Activated CD4-positive, alpha-beta T cell treated with anti-CD3 and anti-CD28 coated beads, Interleukin-2, amount 10 ng/mL, durations not matched to agents 24 days and 14 days (primary cell): ENCODE measurements at regions of chr15 and their contacts with region 1.

Region 1: DNA sequence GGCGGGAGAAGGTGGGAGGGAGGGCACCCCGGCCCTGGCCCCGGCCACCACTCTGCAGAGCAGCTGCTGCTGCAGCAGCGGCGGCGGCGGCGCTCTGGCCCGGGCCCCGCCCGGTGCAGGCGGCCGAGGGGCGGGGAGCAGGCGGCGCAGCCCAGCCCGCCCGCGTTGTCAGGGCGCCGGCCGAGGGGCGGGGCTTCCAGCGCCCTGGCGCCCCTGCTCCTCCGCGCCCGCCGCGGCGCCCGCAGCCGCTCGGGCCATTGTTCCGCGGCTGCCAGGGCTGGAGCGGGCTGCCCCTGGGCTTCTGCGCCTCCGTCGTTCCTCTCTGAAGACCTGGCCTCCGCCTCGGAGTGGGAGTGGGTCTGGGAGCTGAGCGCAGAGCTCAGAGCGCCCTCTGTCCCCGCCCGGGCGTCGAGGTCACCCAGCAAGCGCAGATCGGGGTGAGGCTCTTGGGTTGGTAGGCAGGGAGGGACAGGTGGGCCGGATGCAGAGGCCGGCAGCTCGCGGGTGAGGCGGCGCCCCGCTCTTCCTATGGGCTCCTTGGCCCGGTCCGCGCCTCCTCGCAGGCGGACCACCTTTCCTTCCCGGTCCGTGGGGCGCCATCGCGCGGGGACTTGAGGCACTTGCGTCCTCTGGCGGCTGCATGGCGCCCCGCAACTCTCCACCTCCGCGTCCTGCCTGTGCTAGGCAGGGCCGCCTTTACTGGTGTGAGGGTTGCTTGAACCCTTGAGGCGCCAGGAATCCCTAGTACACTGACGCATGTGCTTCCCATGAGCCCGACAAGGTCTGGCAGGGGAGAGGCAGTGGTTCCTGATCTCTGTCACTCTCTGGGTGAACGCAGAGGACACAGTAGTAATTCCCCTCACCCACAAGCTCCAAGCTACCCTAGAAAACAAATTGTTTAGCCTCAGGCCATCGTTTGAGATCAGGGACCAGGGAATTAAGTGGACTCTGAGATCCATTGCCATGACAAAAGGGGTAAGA is at the start of gene LPCAT4:
- DNase-seq: peak; percentile 97
- H3K4me3 Mint-ChIP-seq: peak within 1 kb of the TSS; percentile 99
- H3K27ac Mint-ChIP-seq: peak within 1 kb of the TSS; percentile 98
- H3K4me1 Mint-ChIP-seq: peaks cover 38% of the 10 kb centered on the region
- H3K27me3 Mint-ChIP-seq: peaks cover 1% of the 10 kb centered on the region
- total RNA-seq, gene LPCAT4: 63.9 and 67.3 TPM in 2 replicates

Region 2: GRCh38 chr15:34038023-34038870 is 329.1 kb before region 1 on chr15:
- intact Hi-C with region 1: loop called (anchors 10 kb)
- DNase-seq: peak; percentile 90
- H3K4me3 Mint-ChIP-seq: peak overlapping the region; percentile 88
- H3K27ac Mint-ChIP-seq: peak overlapping the region; percentile 94
- H3K4me1 Mint-ChIP-seq: peaks cover 23% of the 10 kb centered on the region
- H3K27me3 Mint-ChIP-seq: no peaks in the 10 kb centered on the region

Region 3: DNA sequence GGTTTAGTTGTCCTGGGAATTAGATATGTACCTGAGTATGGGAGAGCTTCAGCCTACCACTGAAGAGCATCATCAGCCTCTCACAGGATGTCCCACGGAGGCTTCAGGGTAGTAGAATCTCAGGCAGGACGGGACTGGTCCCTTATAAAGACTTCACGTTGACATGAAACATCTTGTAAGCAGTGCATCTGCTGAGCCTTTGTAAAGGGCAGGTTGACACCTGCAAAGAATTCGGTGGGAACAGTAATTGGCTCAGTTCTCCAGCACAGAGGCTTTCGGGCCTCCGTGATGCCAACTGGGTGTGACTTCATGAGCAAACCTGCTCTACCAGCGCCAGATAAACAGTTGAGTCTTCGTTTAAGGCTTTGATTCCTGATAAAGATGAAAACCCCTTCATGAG is 301.4 kb before region 1 on chr15:
- intact Hi-C with region 1: loop called (anchors 10 kb)
- DNase-seq: no peak
- H3K4me3 Mint-ChIP-seq: no peak overlapping the region
- H3K27ac Mint-ChIP-seq: no peak overlapping the region
- H3K4me1 Mint-ChIP-seq: peaks cover 5% of the 10 kb centered on the region
- H3K27me3 Mint-ChIP-seq: peaks cover 1% of the 10 kb centered on the region

Region 4: DNA sequence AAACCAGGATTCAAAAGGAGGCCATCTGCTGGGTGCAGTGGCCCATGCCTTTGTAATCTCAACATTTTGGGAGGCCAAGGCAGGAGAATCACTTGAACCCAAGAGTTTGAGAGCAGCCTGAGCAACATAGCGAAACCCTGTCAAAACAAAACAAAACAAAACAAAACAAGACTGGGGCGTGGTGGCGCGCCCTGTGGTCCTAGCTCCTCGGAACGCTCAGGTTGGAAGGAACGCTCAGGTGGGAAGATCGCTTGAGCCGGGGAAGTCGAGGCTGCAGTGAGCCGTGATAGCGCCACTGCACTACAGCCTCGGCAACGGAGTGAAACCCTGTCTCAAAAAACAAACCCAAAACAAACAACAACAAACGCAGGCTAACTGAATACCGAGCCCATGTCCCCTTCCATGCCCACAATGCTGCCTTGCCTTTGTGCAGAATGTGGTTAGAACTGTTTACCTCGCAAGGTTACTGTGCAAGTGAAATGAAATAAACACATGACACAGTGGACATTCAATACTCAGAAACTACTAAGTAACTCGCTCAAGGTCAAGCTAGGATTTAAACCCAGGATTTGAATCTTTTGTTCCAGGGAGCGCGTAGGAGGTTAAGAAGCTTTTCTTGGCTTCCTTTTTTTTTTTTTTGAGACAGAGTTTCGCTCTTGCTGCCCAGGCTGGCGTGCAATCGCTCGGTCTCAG is 143.3 kb before region 1 on chr15:
- intact Hi-C with region 1: loop called (anchors 1 kb)
- DNase-seq: peak; percentile 60
- H3K4me3 Mint-ChIP-seq: peak overlapping the region; percentile 95
- H3K27ac Mint-ChIP-seq: peak overlapping the region; percentile 89
- H3K4me1 Mint-ChIP-seq: peaks cover 26% of the 10 kb centered on the region
- H3K27me3 Mint-ChIP-seq: no peaks in the 10 kb centered on the region

Region 5: GRCh38 chr15:34241372-34242330 is 125.7 kb before region 1 on chr15:
- intact Hi-C with region 1: loop called (anchors 1 kb)
- DNase-seq: peak; percentile 80
- H3K4me3 Mint-ChIP-seq: no peak overlapping the region
- H3K27ac Mint-ChIP-seq: no peak overlapping the region
- H3K4me1 Mint-ChIP-seq: peaks cover 21% of the 10 kb centered on the region
- H3K27me3 Mint-ChIP-seq: no peaks in the 10 kb centered on the region

Region 6: DNA sequence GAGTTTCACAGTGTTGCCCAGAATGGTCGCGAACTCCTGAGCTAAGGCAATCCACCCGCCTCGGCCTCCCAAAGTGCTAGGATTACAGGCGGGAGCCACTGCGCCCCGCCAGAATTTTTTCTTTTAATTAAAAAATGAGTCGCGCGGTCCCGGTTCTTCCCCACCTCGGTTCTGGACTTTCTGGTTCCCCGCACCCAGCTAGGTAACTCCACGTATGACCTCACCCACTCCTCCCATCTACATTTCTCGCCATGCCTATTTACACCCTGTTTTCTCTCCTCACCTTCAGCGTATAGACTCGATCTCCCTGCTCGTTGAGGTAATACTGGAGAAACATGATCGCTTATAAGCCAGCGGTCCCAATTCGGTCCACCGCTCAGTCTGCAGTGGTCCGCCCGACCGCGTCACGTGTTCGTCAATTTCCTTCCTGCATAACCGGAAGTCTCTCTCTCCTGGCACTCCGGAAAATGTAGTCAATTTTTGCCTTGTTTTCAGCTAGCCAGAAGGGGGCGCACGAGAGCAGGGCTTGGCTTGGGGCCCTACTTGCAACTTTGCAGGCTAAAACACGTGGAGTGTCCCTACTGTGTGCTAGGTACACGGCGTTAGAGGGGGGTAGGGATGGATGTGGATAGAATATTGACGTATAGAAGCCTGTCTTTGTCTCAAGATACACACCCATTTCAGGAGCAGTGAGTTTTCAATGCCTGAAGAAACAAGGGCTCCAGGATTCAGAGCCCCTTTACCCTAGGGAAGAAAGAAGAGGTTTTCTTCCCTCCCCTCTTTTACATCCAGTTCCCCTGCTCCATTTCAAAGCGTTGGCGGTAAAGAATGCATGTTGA is 24.4 kb before region 1 on chr15 and contains the starts of genes NOP10 and NUTM1:
- intact Hi-C with region 1: loop called (anchors 1 kb)
- DNase-seq: peak; percentile 98
- H3K4me3 Mint-ChIP-seq: no peak within 1 kb of the TSS
- H3K27ac Mint-ChIP-seq: peak within 1 kb of the TSS; percentile 64
- H3K4me1 Mint-ChIP-seq: peaks cover 16% of the 10 kb centered on the region
- H3K27me3 Mint-ChIP-seq: no peaks in the 10 kb centered on the region
- total RNA-seq, gene NOP10: 238 and 250 TPM in 2 replicates
- total RNA-seq, gene NUTM1: not detected in 2 replicates

Region 7: GRCh38 chr15:34437687-34438086 is 70.3 kb after region 1 on chr15 and contains the start of gene GOLGA8A:
- intact Hi-C with region 1: loop called (anchors 2 kb)
- DNase-seq: peak; percentile 95
- H3K4me3 Mint-ChIP-seq: peak within 1 kb of the TSS; percentile 92
- H3K27ac Mint-ChIP-seq: peak within 1 kb of the TSS; percentile 98
- H3K4me1 Mint-ChIP-seq: peaks cover 20% of the 10 kb centered on the region
- H3K27me3 Mint-ChIP-seq: peaks cover 12% of the 10 kb centered on the region
- total RNA-seq, gene GOLGA8A: 244 and 246 TPM in 2 replicates

Region 8: DNA sequence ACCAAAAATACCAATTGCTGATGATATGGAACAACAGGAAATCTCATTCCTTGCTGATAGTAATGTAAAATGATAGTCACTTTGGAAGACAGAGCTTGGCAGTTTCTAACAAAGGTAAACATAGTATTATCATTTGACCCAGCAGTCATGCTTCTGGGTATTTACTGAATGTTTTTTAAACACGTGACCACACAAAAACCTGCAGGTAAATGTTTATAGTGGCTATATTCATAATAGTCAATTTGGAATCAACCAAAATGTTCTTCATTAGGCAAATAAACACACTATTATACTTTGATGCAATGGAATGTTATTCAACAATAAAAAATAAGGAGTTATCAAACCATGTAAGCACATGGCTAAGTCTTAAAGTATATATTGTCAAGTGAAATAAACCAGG is 94.3 kb after region 1 on chr15:
- intact Hi-C with region 1: no loop called
- DNase-seq: no peak
- H3K4me3 Mint-ChIP-seq: no peak overlapping the region
- H3K27ac Mint-ChIP-seq: no peak overlapping the region
- H3K4me1 Mint-ChIP-seq: no peaks in the 10 kb centered on the region
- H3K27me3 Mint-ChIP-seq: peaks cover 47% of the 10 kb centered on the region